ENCODE measurements at regions of chr7 and their contacts with region 1.

Region 1: GRCh38 chr7:14720785-14721184 is 181.8 kb downstream of the DGKB start:
- DNase-seq: no peak

Region 2: GRCh38 chr7:14691597-14692203 is 29.1 kb before region 1 on chr7:
- intact Hi-C with region 1: no loop called
- DNase-seq: peak; percentile 75

Region 3: GRCh38 chr7:15015545-15016326 is 295.0 kb after region 1 on chr7:
- intact Hi-C with region 1: loop called in 1 of 2 experiments (anchors 10 kb)
- DNase-seq: no peak

Measured in posterior vena cava (tissue), 2 donors.